Gastrocnemius medialis (tissue), 4 donors: ENCODE measurements at regions of chr3 and their contacts with region 1.

Region 1: GRCh38 chr3:101117980-101118379 is 124.8 kb upstream of the ABI3BP start:
- DNase-seq: no peak
- ATAC-seq: no peak
- H3K4me3 ChIP-seq: no peak overlapping the region
- H3K27ac ChIP-seq: no peak overlapping the region
- H3K4me1 ChIP-seq: no peaks in the 10 kb centered on the region
- H3K27me3 ChIP-seq: no peaks in the 10 kb centered on the region
- CTCF ChIP-seq: no peak
- POLR2A ChIP-seq: no peak

Region 2: GRCh38 chr3:101133652-101134051 is 15.7 kb after region 1 on chr3:
- in situ Hi-C with region 1: no loop called
- intact Hi-C with region 1: no loop called
- DNase-seq: no peak
- ATAC-seq: no peak
- H3K4me3 ChIP-seq: no peak overlapping the region
- H3K27ac ChIP-seq: no peak overlapping the region
- H3K4me1 ChIP-seq: no peaks in the 10 kb centered on the region
- H3K27me3 ChIP-seq: no peaks in the 10 kb centered on the region
- CTCF ChIP-seq: no peak
- POLR2A ChIP-seq: no peak

Region 3: GRCh38 chr3:101144105-101144504 is 26.1 kb after region 1 on chr3:
- in situ Hi-C with region 1: no loop called
- intact Hi-C with region 1: loop called (anchors 2 kb)
- DNase-seq: no peak
- ATAC-seq: no peak
- H3K4me3 ChIP-seq: no peak overlapping the region
- H3K27ac ChIP-seq: no peak overlapping the region
- H3K4me1 ChIP-seq: no peaks in the 10 kb centered on the region
- H3K27me3 ChIP-seq: no peaks in the 10 kb centered on the region
- CTCF ChIP-seq: no peak
- POLR2A ChIP-seq: no peak

Region 4: GRCh38 chr3:101155825-101156224 is 37.8 kb after region 1 on chr3:
- in situ Hi-C with region 1: no loop called
- intact Hi-C with region 1: no loop called
- DNase-seq: no peak
- ATAC-seq: no peak
- H3K4me3 ChIP-seq: no peak overlapping the region
- H3K27ac ChIP-seq: no peak overlapping the region
- H3K4me1 ChIP-seq: no peaks in the 10 kb centered on the region
- H3K27me3 ChIP-seq: no peaks in the 10 kb centered on the region
- CTCF ChIP-seq: no peak
- POLR2A ChIP-seq: no peak